ENCODE measurements at regions of chr1 and their contacts with region 1.

Region 1: GRCh38 chr1:48202030-48202752 is 20.3 kb upstream of the SLC5A9 start:
- DNase-seq: peak; percentile 47 to 77
- H3K4me3 ChIP-seq: no peak overlapping the region
- H3K4me1 ChIP-seq: no peaks in the 10 kb centered on the region
- H3K27me3 ChIP-seq: no peaks in the 10 kb centered on the region

Region 2: GRCh38 chr1:48109390-48110013 is 92.7 kb before region 1 on chr1:
- in situ Hi-C with region 1: loop called (anchors 5 kb)
- DNase-seq: peak; percentile 23 to 45
- H3K4me3 ChIP-seq: no peak overlapping the region
- H3K4me1 ChIP-seq: no peaks in the 10 kb centered on the region
- H3K27me3 ChIP-seq: no peaks in the 10 kb centered on the region; the same call in 1 of the 2 replicates